ENCODE measurements at regions of chr10 and their contacts with region 1.

Region 1: GRCh38 chr10:57338823-57339558 is 928.7 kb downstream of the IPMK start:
- DNase-seq: peak; percentile 44
- CTCF ChIP-seq: peak; percentile 35

Region 2: DNA sequence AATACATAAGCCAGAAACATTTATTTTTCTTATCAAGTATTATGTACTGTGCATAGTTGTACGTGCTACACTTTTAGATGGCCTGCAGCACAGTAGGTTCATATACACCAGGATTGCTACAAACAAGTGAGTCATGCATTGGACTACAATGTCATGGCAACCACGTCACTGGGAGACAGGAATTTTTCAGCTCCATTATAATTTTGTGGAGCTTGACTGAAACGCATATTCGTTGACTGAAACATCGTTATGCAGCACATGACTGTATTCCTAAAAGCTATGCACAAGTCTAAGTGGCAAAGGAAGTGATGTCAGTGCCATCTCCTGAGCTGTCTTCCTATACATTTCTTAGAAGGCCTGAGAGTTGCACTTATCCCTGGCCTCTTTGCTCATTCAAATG is 56.9 kb after region 1 on chr10:
- in situ Hi-C with region 1: no loop called
- DNase-seq: no peak
- CTCF ChIP-seq: no peak

Region 3: GRCh38 chr10:57657164-57657765 is 318.3 kb after region 1 on chr10:
- in situ Hi-C with region 1: loop called (anchors 25 kb)
- DNase-seq: peak; percentile 32
- CTCF ChIP-seq: peak; percentile 88

Region 4: GRCh38 chr10:57699944-57700343 is 361.0 kb after region 1 on chr10:
- in situ Hi-C with region 1: no loop called
- DNase-seq: no peak
- CTCF ChIP-seq: no peak

Region 5: GRCh38 chr10:58064714-58065528 is 725.9 kb after region 1 on chr10:
- in situ Hi-C with region 1: loop called (anchors 25 kb)
- DNase-seq: peak; percentile 26
- CTCF ChIP-seq: peak; percentile 55

Measured in GM13976 (cell line).